GM12878 (cell line): ENCODE measurements at regions of chr3 and their contacts with region 1.

Region 1: DNA sequence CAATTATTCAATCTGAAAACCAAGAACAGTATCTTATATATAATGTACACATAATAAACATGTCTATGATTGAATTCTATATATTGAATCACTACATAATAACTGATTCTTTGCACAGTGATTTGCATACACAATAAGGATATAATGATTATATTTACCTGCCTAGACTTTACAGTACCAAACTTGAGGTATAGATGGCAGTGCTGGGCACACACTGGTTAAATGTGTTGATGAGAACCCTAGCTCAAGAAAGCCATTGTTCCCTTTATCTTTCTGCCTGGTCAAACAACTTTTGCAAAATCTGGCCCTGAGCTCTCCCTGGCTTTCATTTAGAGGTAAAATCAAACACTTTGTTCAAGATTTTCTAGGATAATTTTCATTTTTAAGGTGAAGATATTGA is 697.7 kb downstream of the TUSC7 start:
- DNase-seq: no peak
- ATAC-seq: peak; percentile 91
- H3K4me3 ChIP-seq: no peak overlapping the region
- H3K27ac ChIP-seq: no peak overlapping the region
- H3K4me1 ChIP-seq: no peaks in the 10 kb centered on the region
- H3K27me3 ChIP-seq: no peaks in the 10 kb centered on the region; a peak in 1 of 4 replicates
- CTCF ChIP-seq: peak; percentile 27 to 61 (median 42); a peak in 5 of 6 replicates
- EP300 ChIP-seq: no peak
- POLR2A ChIP-seq: no peak
- RAD21 ChIP-seq: peak; percentile 40; the same call in 1 of the 2 replicates

Region 2: GRCh38 chr3:117248153-117248552 is 159.2 kb before region 1 on chr3:
- CTCF ChIA-PET with region 1: no interaction called
- POLR2A ChIA-PET with region 1: no interaction called
- RAD21 ChIA-PET with region 1: no interaction called
- SMC1A ChIA-PET with region 1: no interaction called
- in situ Hi-C with region 1: no loop called
- intact Hi-C with region 1: no loop called
- DNase-seq: no peak
- ATAC-seq: no peak
- H3K4me3 ChIP-seq: no peak overlapping the region
- H3K27ac ChIP-seq: no peak overlapping the region
- H3K4me1 ChIP-seq: no peaks in the 10 kb centered on the region
- H3K27me3 ChIP-seq: no peaks in the 10 kb centered on the region; a peak in 1 of 4 replicates
- CTCF ChIP-seq: no peak
- EP300 ChIP-seq: no peak
- POLR2A ChIP-seq: no peak
- RAD21 ChIP-seq: no peak

Region 3: GRCh38 chr3:117518364-117518763 is 111.0 kb after region 1 on chr3:
- CTCF ChIA-PET with region 1: interaction called, 177 read pairs
- POLR2A ChIA-PET with region 1: no interaction called
- RAD21 ChIA-PET with region 1: interaction called, 84 read pairs
- SMC1A ChIA-PET with region 1: interaction called, 187 read pairs
- in situ Hi-C with region 1: no loop called
- intact Hi-C with region 1: no loop called
- DNase-seq: no peak
- ATAC-seq: no peak
- H3K4me3 ChIP-seq: no peak overlapping the region
- H3K27ac ChIP-seq: no peak overlapping the region
- H3K4me1 ChIP-seq: no peaks in the 10 kb centered on the region
- H3K27me3 ChIP-seq: no peaks in the 10 kb centered on the region
- CTCF ChIP-seq: no peak
- EP300 ChIP-seq: no peak
- POLR2A ChIP-seq: no peak
- RAD21 ChIP-seq: no peak

Region 4: DNA sequence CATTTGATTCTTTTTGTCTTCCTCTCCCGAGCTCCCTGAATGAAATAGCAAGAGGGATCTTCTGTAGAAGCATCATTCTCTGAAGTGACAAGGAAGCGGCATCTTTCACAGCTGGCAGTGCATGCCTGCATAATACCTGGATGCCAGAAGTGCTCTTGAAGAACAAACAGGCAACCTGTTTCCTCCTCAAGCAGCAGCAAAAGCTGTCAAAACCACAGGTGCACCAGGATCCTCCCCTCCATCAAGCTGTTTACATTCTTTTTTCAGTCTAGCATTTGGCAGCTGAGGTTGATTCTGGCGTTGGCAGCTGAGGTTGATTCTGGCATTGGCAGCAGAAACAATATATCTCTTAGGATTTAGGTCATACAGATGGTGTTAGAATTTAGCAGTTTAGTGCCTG is 281.3 kb after region 1 on chr3:
- CTCF ChIA-PET with region 1: no interaction called
- POLR2A ChIA-PET with region 1: no interaction called
- RAD21 ChIA-PET with region 1: no interaction called
- SMC1A ChIA-PET with region 1: no interaction called
- in situ Hi-C with region 1: no loop called
- intact Hi-C with region 1: no loop called
- DNase-seq: no peak
- ATAC-seq: no peak
- H3K4me3 ChIP-seq: no peak overlapping the region
- H3K27ac ChIP-seq: no peak overlapping the region
- H3K4me1 ChIP-seq: no peaks in the 10 kb centered on the region
- H3K27me3 ChIP-seq: no peaks in the 10 kb centered on the region; a peak in 1 of 4 replicates
- CTCF ChIP-seq: no peak
- EP300 ChIP-seq: no peak
- POLR2A ChIP-seq: no peak
- RAD21 ChIP-seq: no peak

Region 5: DNA sequence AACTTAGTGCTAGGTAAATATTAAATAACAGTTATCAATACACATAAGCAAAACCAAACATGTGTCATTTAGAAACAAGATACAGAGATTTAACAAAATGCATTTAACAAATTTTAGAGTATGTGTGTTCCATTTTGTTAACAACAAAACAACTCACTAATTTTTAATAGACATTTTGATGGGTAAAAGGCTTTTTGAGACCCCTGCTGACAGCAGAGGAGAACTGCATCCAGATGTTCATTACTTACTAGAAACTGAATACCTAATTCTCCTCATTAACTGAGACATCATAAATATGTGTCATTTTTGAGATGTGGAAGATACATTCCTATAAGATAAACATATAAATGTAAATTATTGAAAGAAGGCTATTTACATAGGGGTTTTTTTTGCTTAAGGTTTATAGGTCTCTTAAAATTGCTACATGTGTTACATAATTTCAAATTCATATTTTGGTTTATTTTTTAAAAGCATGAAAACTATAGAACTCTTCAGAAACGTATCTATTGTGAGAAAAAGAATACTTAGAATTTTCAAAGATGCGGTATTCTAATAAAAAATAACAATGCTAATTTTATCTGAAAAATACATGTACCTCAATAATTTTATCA is 312.1 kb after region 1 on chr3:
- CTCF ChIA-PET with region 1: no interaction called
- POLR2A ChIA-PET with region 1: no interaction called
- RAD21 ChIA-PET with region 1: no interaction called
- SMC1A ChIA-PET with region 1: no interaction called
- in situ Hi-C with region 1: no loop called
- intact Hi-C with region 1: loop called (anchors 10 kb)
- DNase-seq: no peak
- ATAC-seq: peak; percentile 54; the same call in 2 of the 3 replicates
- H3K4me3 ChIP-seq: no peak overlapping the region
- H3K27ac ChIP-seq: no peak overlapping the region
- H3K4me1 ChIP-seq: no peaks in the 10 kb centered on the region
- H3K27me3 ChIP-seq: no peaks in the 10 kb centered on the region; a peak in 1 of 4 replicates
- CTCF ChIP-seq: peak; percentile 50 to 57 (median 55)
- EP300 ChIP-seq: no peak
- POLR2A ChIP-seq: no peak
- RAD21 ChIP-seq: peak; percentile 54; the same call in 1 of the 2 replicates